ENCODE measurements at regions of chrX and their contacts with region 1.

Region 1: GRCh38 chrX:71652405-71652804 is 14.9 kb upstream of the LOC101059915 start:
- DNase-seq: peak; percentile 65
- H3K4me3 ChIP-seq: no peak overlapping the region
- H3K27ac ChIP-seq: no peak overlapping the region
- H3K4me1 ChIP-seq: no peaks in the 10 kb centered on the region
- H3K27me3 ChIP-seq: no peaks in the 10 kb centered on the region
- CTCF ChIP-seq: peak; percentile 61

Region 2: GRCh38 chrX:71432733-71433132 is 219.7 kb before region 1 on chrX:
- intact Hi-C with region 1: loop called (anchors 5 kb)
- DNase-seq: no peak
- H3K4me3 ChIP-seq: no peak overlapping the region
- H3K27ac ChIP-seq: no peak overlapping the region
- H3K4me1 ChIP-seq: no peaks in the 10 kb centered on the region
- H3K27me3 ChIP-seq: no peaks in the 10 kb centered on the region
- CTCF ChIP-seq: no peak

Region 3: GRCh38 chrX:71618303-71618721 is 34.1 kb before region 1 on chrX and contains the start of gene CXCR3:
- intact Hi-C with region 1: loop called (anchors 5 kb)
- DNase-seq: no peak
- H3K4me3 ChIP-seq: peak within 1 kb of the TSS; percentile 3
- H3K27ac ChIP-seq: peak within 1 kb of the TSS; percentile 73
- H3K4me1 ChIP-seq: peaks cover 4% of the 10 kb centered on the region
- H3K27me3 ChIP-seq: no peaks in the 10 kb centered on the region
- CTCF ChIP-seq: no peak
- total RNA-seq, gene CXCR3: 2.1 to 3.9 TPM